A549 (cell line): ENCODE measurements at regions of chr13 and their contacts with region 1.

Region 1: GRCh38 chr13:41222259-41222852 is 28.0 kb upstream of the KBTBD7 start:
- DNase-seq: peak; percentile 40 to 48
- ATAC-seq: peak; percentile 74 to 91; a peak in 5 of 6 replicates
- H3K4me3 ChIP-seq: no peak overlapping the region
- H3K27ac ChIP-seq: no peak overlapping the region
- H3K4me1 ChIP-seq: peaks cover 8% of the 10 kb centered on the region; the same call in 1 of the 3 replicates
- CTCF ChIP-seq: peak; percentile 55
- EP300 ChIP-seq: no peak
- POLR2A ChIP-seq: no peak
- RAD21 ChIP-seq: peak; percentile 33 to 50; a peak in 3 of 5 replicates

Region 2: DNA sequence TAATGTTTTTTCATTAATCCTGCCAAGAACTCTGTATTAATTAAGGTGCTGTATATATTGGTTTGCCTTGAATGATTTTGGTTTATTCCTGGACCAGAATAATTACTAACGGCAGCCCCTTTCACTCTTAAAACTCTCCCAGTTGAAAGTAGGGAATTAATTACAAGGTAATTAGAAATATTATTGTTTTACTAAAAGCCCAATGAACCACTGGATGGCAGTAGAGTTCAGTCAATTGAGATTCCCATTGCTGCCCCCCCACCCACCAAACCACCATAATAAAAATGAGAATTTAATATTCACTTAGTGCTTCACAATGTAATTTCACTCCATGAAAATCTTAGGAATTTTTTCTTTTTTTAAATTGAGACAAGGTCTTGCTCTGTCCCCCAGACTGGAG is 147.3 kb before region 1 on chr13:
- CTCF ChIA-PET with region 1: interaction called, 12 read pairs
- POLR2A ChIA-PET with region 1: no interaction called
- DNase-seq: peak; percentile 16 to 24
- ATAC-seq: no peak
- H3K4me3 ChIP-seq: no peak overlapping the region
- H3K27ac ChIP-seq: no peak overlapping the region
- H3K4me1 ChIP-seq: no peaks in the 10 kb centered on the region
- CTCF ChIP-seq: peak; percentile 61
- EP300 ChIP-seq: no peak
- POLR2A ChIP-seq: no peak
- RAD21 ChIP-seq: peak; percentile 61 to 71